CD4-positive, alpha-beta memory T cell (primary cell): ENCODE measurements at regions of chr17 and their contacts with region 1.

Region 1: DNA sequence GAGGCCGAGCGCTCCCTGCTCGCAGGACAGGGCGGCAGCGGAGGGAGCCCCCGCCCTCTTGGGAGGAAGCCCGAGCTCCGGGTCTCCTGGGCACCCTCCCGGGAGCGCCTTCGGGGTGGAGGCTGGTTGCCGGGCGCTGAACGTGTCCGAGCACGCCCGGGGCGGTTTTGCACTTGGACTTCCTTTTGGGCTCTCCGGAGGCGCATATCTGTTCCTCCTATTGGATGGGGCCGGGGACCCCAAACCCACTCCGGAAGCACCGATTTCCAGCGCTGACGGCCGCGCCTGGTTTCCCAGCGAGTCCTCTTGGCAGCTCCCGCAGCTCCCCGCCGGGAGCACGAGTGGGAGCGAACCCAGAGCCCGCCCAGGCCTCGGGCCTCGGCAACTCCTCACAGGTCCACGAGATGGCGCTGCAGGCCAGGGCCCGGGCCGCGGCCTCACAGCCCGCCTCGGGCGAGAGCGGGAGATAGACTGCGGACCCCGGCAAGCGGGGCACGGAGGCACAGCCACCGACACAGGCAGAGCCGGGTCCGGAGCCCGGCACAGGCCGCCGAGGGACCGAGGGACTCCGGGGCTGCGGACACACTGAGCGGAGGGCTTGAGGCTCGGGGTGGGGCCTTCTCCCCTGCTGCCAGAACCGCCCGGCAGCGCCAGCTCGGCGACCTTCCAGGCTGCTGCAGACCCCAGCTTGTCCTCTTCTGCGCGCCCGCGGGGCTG is 12.7 kb downstream of the TBX2 start:
- DNase-seq: peak; percentile 63 to 85 (median 78)
- H3K4me3 ChIP-seq: peak overlapping the region; percentile 47 to 80
- H3K4me3 Mint-ChIP-seq: peak overlapping the region; percentile 31 to 79 (median 57)
- H3K27ac ChIP-seq: peak overlapping the region; percentile 24
- H3K27ac Mint-ChIP-seq: no peak overlapping the region
- H3K4me1 ChIP-seq: peaks cover 23% of the 10 kb centered on the region
- H3K4me1 Mint-ChIP-seq: peaks cover 10 to 26% (median 17%) of the 10 kb centered on the region in 4 donors
- H3K27me3 ChIP-seq: peaks cover 27% of the 10 kb centered on the region
- H3K27me3 Mint-ChIP-seq: peaks cover 24 to 27% of the 10 kb centered on the region in 2 donors

Region 2: DNA sequence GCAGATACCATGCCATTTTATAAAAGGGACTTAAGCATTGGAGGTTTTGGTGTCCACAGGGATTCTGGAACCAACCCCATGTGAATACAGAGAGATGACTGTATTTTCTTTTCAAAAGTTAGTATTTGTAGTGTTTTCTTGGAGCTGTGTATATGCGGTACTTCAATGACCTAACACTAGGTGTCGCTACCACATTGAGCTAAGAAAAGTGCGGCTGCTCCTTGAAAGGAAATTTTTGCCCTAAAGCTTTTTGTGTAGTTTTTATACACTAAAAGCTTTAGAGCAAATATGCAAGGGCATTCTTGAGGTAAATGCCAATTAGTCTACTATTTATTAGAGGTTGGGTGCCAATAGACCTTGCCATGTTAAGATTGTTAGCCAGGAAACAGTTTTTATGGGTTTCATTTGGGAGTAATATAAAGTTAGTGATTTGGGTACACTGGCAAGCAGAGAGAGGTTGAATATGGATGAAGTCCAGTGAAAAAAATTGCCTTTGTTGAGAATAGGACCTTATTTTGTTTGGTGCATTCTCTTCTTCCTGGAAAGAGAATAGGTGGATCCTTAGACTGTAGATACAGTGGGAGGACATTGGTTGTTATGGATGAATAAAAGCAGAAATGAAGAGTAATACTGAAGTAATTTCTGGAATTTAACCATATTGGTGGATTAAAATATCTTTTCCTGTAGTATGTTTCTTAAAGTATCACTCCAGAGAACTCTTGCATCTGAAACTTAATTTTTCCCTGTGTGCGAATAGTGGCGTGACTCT is 691.4 kb before region 1 on chr17:
- CTCF ChIA-PET with region 1: interaction called, 10 read pairs
- POLR2A ChIA-PET with region 1: interaction called, 3 read pairs
- intact Hi-C with region 1: loop called (anchors 5 kb)
- DNase-seq: peak in 4 of 5 donors; percentile 37 to 48 (median 46)
- H3K4me3 ChIP-seq: no peak overlapping the region
- H3K4me3 Mint-ChIP-seq: no peak overlapping the region
- H3K27ac ChIP-seq: no peak overlapping the region
- H3K27ac Mint-ChIP-seq: no peak overlapping the region
- H3K4me1 ChIP-seq: no peaks in the 10 kb centered on the region
- H3K4me1 Mint-ChIP-seq: peaks cover 0 to 4% (median 1%) of the 10 kb centered on the region in 4 donors
- H3K27me3 ChIP-seq: no peaks in the 10 kb centered on the region
- H3K27me3 Mint-ChIP-seq: no peaks in the 10 kb centered on the region

Region 3: GRCh38 chr17:61002316-61002736 is 410.0 kb before region 1 on chr17:
- CTCF ChIA-PET with region 1: interaction called, 3 read pairs
- POLR2A ChIA-PET with region 1: no interaction called
- intact Hi-C with region 1: loop called (anchors 5 kb)
- DNase-seq: peak in 4 of 5 donors; percentile 24 to 33 (median 27)
- H3K4me3 ChIP-seq: no peak overlapping the region
- H3K4me3 Mint-ChIP-seq: no peak overlapping the region
- H3K27ac ChIP-seq: no peak overlapping the region
- H3K27ac Mint-ChIP-seq: no peak overlapping the region
- H3K4me1 ChIP-seq: no peaks in the 10 kb centered on the region
- H3K4me1 Mint-ChIP-seq: no peaks in the 10 kb centered on the region
- H3K27me3 ChIP-seq: no peaks in the 10 kb centered on the region
- H3K27me3 Mint-ChIP-seq: no peaks in the 10 kb centered on the region

Region 4: GRCh38 chr17:61426013-61426730 is 13.9 kb after region 1 on chr17:
- CTCF ChIA-PET with region 1: interaction called, 13 read pairs
- POLR2A ChIA-PET with region 1: no interaction called
- intact Hi-C with region 1: no loop called
- DNase-seq: no peak
- H3K4me3 ChIP-seq: no peak overlapping the region
- H3K4me3 Mint-ChIP-seq: no peak overlapping the region
- H3K27ac ChIP-seq: no peak overlapping the region
- H3K27ac Mint-ChIP-seq: no peak overlapping the region
- H3K4me1 ChIP-seq: no peaks in the 10 kb centered on the region
- H3K4me1 Mint-ChIP-seq: no peaks in the 10 kb centered on the region
- H3K27me3 ChIP-seq: peaks cover 4% of the 10 kb centered on the region
- H3K27me3 Mint-ChIP-seq: peaks cover 20 to 34% of the 10 kb centered on the region in 2 donors

Region 5: DNA sequence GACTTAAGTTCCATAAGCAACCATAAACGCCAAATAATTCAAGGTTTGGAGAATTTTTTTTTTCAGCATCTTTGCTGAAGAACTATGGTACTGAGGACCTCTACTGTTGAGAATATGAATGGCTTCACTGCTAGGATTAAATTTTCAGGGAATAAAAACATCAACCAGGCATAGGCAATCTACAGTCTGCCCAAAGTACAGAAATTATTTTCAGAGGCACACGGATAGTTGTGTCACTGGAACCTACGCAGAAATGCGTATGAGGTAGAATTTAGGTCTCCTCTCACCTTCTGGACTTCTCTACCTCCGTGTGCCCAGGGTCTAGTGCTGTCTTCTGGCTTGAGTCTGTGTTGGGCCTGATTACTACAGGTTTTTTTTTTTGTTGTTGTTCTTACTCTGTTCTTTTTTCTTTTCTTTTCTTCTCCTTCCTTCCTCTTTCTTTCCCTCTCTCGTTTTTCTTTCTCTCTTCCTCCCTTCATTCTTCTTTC is 139.0 kb after region 1 on chr17:
- CTCF ChIA-PET with region 1: no interaction called
- POLR2A ChIA-PET with region 1: no interaction called
- intact Hi-C with region 1: loop called (anchors 1 kb)
- DNase-seq: peak in 2 of 5 donors; percentile 12 to 14
- H3K4me3 ChIP-seq: no peak overlapping the region
- H3K4me3 Mint-ChIP-seq: no peak overlapping the region
- H3K27ac ChIP-seq: no peak overlapping the region
- H3K27ac Mint-ChIP-seq: no peak overlapping the region
- H3K4me1 ChIP-seq: no peaks in the 10 kb centered on the region
- H3K4me1 Mint-ChIP-seq: peaks cover 0 to 8% (median 0%) of the 10 kb centered on the region in 4 donors
- H3K27me3 ChIP-seq: peaks cover 3% of the 10 kb centered on the region
- H3K27me3 Mint-ChIP-seq: peaks cover 22 to 25% of the 10 kb centered on the region in 2 donors

Region 6: DNA sequence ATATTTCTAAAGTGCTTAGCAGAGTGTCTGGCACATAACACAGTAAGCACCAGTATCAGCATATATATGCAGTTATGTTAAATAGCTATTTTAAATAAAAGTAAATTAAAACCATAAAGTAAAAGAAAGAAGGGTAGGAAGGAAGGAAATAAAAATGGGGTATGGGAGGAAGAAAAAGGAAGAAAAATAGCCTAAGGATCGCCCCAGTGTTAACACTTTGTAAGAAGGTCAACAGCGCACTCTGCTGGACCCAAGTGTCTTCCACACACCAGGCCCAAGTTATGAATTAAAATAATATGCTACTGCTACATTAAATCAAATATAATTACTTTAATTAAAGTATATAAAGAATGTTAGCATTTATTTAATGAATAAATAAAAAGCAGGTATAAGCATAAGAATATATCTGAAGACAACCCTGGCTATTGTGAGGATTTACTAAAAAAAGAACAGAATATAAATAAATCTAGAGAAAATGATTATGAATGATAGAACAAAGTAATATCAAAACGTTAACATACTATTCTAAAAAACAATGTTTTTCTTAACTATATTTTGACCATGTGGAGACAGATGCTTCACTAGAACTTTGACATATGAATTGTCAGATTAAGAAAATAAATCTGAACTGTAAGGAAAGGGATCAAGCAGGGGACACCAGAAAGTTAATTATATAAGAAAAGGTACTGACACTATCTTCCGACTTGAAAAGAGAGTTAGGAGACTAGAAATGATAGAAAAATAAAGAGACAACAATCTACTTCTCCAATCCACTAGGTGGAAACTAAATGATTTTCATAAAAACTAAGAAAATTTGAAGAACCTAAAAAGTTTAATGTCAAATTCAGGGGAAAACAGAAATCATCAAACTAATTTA is 425.1 kb after region 1 on chr17:
- CTCF ChIA-PET with region 1: interaction called, 9 read pairs
- POLR2A ChIA-PET with region 1: no interaction called
- intact Hi-C with region 1: loop called (anchors 1 kb)
- DNase-seq: peak; percentile 28 to 47 (median 37)
- H3K4me3 ChIP-seq: no peak overlapping the region
- H3K4me3 Mint-ChIP-seq: no peak overlapping the region
- H3K27ac ChIP-seq: no peak overlapping the region
- H3K27ac Mint-ChIP-seq: no peak overlapping the region
- H3K4me1 ChIP-seq: no peaks in the 10 kb centered on the region
- H3K4me1 Mint-ChIP-seq: no peaks in the 10 kb centered on the region
- H3K27me3 ChIP-seq: no peaks in the 10 kb centered on the region
- H3K27me3 Mint-ChIP-seq: no peaks in the 10 kb centered on the region

Region 7: GRCh38 chr17:61862975-61863800 is 450.9 kb after region 1 on chr17 and contains the start of gene BRIP1:
- CTCF ChIA-PET with region 1: no interaction called
- POLR2A ChIA-PET with region 1: no interaction called
- intact Hi-C with region 1: loop called (anchors 1 kb)
- DNase-seq: peak; percentile 86 to 94 (median 86)
- H3K4me3 ChIP-seq: peak within 1 kb of the TSS; percentile 84 to 96
- H3K4me3 Mint-ChIP-seq: peak within 1 kb of the TSS; percentile 95 to 99 (median 97)
- H3K27ac ChIP-seq: peak within 1 kb of the TSS; percentile 66
- H3K27ac Mint-ChIP-seq: peak within 1 kb of the TSS; percentile 90 to 98 (median 95)
- H3K4me1 ChIP-seq: peaks cover 27% of the 10 kb centered on the region
- H3K4me1 Mint-ChIP-seq: peaks cover 22 to 33% (median 27%) of the 10 kb centered on the region in 4 donors
- H3K27me3 ChIP-seq: no peaks in the 10 kb centered on the region
- H3K27me3 Mint-ChIP-seq: no peaks in the 10 kb centered on the region
- total RNA-seq, gene BRIP1: 1.5 to 1.7 TPM